Mammary epithelial cell (primary cell): ENCODE measurements at regions of chr11 and their contacts with region 1.

Region 1: DNA sequence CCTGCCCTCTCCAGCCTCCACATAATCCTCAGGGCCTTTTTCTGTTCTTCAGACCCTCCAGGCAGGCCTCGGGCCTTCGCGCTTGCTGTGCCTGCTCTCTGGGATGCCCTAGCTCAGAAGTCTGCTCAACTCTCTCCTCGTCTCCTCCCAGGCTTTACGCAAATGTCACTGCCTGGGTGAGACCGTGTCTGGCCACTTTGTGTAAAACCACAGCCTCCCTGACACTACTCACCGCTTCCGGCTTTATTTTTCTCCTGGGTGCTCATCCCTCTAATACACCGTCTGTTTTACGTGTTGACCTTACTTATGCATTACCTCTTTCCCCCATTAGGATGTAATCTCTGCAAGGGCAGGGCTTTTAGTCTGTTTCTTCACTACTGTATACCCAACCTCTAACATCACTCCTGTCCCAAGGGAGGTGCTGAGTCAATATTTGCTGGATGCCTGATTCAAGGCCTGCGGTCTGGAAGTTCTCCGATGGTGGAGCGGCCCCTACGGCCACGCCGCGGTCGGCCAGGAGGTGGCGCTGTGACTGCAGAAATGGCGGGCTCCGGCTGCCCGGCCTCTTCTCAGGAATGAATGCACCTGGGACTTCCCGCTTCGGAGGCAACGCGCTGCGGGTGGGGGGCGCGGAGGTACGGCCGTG is 58.2 kb upstream of the THY1 start:
- DNase-seq: peak; percentile 78
- H3K4me3 ChIP-seq: no peak overlapping the region
- H3K27ac ChIP-seq: no peak overlapping the region
- H3K4me1 ChIP-seq: no peaks in the 10 kb centered on the region
- H3K27me3 ChIP-seq: no peaks in the 10 kb centered on the region
- CTCF ChIP-seq: peak; percentile 91 to 97

Region 2: DNA sequence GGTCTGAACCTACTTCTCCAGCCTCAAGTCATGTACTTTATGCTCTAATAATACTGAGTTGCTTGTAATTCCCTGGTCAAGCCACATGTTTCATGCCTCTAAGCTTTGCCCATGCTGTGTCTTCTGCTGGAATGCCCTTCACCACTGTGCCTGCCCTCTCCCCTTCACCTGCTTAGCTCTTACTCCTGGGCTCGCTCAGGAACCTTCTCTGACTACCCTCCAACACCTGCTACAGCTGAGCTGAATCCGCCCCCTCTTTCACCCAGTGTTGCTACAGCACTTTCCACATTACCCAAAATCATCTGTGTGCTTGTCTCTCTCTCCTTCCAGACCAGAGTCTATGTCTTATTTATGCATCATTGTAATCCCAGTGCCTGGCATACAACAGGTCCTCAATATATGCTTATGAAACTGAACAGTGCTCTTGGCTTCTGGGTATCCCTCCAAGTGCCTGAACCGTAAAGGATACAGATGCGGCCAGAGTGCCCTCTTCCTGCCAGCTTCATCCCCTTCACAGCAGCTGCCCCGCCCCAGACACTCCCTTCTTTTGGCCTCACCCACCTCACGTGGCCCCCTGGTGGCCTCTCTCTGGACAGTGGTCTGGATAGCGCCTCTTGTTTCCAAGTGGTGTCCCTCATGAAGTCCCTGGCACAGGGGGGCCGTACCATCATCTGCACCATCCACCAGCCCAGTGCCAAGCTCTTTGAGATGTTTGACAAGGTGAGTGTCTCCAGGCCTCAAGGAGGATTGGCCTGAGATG is 325.2 kb before region 1 on chr11:
- CTCF ChIA-PET with region 1: no interaction called
- dilution Hi-C with region 1: no loop called
- in situ Hi-C with region 1: no loop called
- intact Hi-C with region 1: no loop called
- DNase-seq: no peak
- H3K4me3 ChIP-seq: no peak overlapping the region
- H3K27ac ChIP-seq: no peak overlapping the region
- H3K4me1 ChIP-seq: no peaks in the 10 kb centered on the region
- H3K27me3 ChIP-seq: no peaks in the 10 kb centered on the region
- CTCF ChIP-seq: no peak

Region 3: DNA sequence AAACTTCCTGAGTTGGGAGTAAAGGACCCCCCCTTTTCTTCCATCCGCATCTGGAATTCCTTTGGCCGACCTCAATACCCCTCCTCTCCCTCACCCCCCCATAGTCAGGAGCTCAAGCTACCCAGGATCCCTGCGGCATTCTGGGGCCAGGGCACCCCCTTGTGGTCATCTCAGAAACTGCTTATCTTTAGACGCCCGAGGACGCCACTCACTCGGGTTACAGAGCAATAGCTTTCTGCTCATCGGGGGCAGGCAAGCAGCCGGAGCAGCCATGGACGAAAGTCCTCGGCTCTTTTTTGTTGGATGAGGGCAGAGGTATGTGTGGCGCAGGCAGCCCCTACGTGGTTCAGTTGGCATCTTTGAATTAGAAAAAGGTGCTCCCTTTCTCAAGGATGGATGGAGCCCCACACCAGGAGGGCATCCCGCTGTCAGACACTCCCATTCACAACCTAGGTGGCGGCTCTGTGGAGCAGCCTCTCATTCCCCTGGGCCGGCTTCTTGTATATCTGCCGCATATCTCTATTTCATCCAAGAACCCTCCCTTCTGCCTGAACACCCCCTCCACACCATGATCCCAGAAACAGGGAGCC is 142.7 kb before region 1 on chr11:
- CTCF ChIA-PET with region 1: no interaction called
- dilution Hi-C with region 1: no loop called
- in situ Hi-C with region 1: no loop called
- intact Hi-C with region 1: no loop called
- DNase-seq: peak; percentile 44
- H3K4me3 ChIP-seq: no peak overlapping the region
- H3K27ac ChIP-seq: no peak overlapping the region
- H3K4me1 ChIP-seq: peaks cover 29% of the 10 kb centered on the region
- H3K27me3 ChIP-seq: peaks cover 12% of the 10 kb centered on the region
- CTCF ChIP-seq: peak; percentile 85

Region 4: DNA sequence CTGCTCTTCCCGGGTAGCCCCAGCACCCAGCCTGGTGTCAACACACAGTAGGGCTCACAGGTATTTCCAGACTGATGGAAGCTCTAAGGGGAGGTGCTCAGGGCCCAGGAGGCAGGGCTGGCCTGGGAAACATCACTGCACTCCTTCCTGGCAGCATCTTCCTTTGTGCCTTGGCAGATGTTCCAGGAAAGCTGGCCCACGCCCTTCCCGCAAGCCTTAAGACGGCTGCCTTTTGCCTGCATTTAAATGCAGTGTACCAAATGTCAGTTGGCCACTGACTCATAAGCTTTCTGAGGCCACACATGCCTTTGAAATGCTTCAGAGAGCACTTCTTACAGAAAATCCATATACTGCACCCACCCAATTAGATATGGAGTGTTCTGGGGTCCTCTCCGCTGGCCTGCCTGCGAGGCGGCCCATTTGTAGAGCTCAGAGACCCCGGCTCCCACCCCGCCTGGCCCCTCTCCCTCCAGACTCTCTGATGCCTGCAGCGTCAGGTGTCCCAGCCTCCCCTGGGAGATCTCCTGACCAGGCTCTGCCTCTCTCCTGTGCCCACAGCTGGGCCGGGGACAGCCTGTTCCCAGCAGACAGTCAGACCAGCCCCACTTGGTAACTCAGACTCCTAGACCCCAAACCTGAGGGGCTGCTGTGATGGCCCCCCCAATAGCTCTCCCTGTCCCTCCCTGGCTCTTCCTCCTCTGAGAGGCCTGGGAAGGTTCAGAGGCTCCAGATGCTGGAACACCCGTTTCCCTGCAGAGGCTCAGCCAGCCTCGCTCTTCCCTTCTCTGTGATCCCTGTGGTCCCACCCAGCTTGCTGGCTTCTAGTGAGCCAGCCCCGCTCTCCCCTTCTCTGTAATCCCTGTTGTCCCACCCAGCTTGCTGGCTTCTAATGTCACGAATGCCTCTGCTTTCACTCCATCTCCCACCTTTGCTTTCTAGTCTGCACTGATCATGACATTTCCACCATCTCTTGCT is 10.5 kb before region 1 on chr11:
- CTCF ChIA-PET with region 1: no interaction called
- dilution Hi-C with region 1: no loop called
- in situ Hi-C with region 1: no loop called
- intact Hi-C with region 1: no loop called
- DNase-seq: peak; percentile 75
- H3K4me3 ChIP-seq: no peak overlapping the region
- H3K27ac ChIP-seq: no peak overlapping the region
- H3K4me1 ChIP-seq: peaks cover 8% of the 10 kb centered on the region
- H3K27me3 ChIP-seq: no peaks in the 10 kb centered on the region
- CTCF ChIP-seq: no peak

Region 5: GRCh38 chr11:119520966-119521365 is 39.8 kb after region 1 on chr11:
- CTCF ChIA-PET with region 1: no interaction called
- dilution Hi-C with region 1: loop called (anchors 5 kb)
- in situ Hi-C with region 1: no loop called
- intact Hi-C with region 1: no loop called
- DNase-seq: no peak
- H3K4me3 ChIP-seq: no peak overlapping the region
- H3K27ac ChIP-seq: no peak overlapping the region
- H3K4me1 ChIP-seq: no peaks in the 10 kb centered on the region
- H3K27me3 ChIP-seq: no peaks in the 10 kb centered on the region
- CTCF ChIP-seq: no peak

Region 6: DNA sequence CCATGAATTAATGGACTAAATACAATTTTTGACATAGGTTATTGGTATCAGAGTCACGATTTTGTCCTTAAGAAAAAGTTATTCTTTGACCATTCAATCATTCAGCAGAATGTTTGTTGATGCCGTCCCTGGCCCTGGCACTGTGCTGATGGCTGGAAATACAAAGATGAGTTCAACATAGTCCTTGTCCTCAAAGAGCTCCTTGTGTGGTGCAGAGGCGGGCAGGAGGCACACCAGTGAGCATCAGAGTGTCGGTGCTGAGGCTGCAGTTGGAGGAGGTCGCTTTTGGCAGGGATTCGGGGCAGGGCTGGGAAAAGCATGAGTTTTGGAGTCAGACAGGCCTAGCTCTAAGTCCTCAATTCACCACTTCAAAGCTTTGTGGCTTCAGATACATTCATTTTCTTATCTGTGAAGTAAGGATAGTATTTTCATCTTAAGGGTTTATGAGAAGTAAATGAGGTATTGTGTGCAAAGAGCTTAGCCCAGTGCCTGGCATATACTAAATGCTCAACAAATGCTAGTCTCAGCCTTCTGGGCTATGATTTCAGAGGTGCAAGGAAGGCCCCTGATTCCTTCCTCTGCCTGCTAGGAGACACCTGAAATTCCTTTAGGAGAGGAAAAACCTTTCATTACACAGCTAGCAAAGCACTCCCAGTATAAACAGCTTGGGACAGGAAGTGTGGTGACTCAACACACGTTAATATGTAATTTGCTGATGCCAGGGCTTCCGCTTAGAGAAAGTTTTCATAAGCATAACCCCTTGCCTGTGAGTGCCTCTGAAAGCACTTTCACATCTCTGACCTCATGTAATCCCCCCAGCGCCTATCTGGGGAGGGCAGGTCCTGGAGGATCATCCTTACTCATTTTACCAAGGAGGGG is 134.1 kb after region 1 on chr11:
- CTCF ChIA-PET with region 1: no interaction called
- dilution Hi-C with region 1: no loop called
- in situ Hi-C with region 1: no loop called
- intact Hi-C with region 1: loop called (anchors 1 kb)
- DNase-seq: peak; percentile 78
- H3K4me3 ChIP-seq: no peak overlapping the region
- H3K27ac ChIP-seq: peak overlapping the region; percentile 32
- H3K4me1 ChIP-seq: peaks cover 23% of the 10 kb centered on the region
- H3K27me3 ChIP-seq: no peaks in the 10 kb centered on the region
- CTCF ChIP-seq: no peak

Region 7: DNA sequence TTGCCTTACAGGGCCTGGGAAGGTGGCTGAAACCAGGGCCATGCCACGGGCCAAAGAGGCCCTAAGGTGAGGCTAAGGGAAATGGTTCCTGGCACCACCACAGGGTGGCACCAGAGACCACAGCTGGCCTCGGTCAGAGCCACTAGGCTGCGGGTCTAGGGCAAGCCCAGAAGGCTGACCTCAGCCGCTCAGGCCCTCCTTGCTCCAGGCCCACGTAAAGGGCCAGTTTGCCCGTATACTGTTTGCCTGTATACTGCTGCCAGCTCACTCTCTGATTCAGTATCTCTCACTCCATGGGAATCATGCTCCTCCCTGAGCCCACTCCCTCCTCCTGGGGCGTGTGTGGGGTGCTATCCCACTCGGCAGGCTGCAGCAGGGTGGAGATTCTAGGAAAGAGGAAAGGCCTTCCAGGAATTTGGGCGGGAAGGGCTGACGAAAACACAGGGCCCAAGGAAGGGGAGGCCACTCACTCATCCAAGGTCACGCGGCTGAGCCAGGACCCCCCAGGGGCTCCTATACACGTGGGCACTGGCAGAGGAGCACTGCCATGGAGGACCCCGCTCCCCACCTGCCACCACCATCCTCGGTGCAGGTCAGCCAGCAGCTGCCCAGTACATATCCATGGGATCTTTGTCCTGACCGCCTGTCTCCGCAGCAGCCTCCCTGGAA is 185.5 kb after region 1 on chr11:
- CTCF ChIA-PET with region 1: no interaction called
- dilution Hi-C with region 1: no loop called
- in situ Hi-C with region 1: no loop called
- intact Hi-C with region 1: loop called (anchors 1 kb)
- DNase-seq: peak; percentile 58
- H3K4me3 ChIP-seq: no peak overlapping the region
- H3K27ac ChIP-seq: peak overlapping the region; percentile 4
- H3K4me1 ChIP-seq: peaks cover 26% of the 10 kb centered on the region
- H3K27me3 ChIP-seq: no peaks in the 10 kb centered on the region
- CTCF ChIP-seq: peak; percentile 76 to 92

Region 8: GRCh38 chr11:120013325-120014270 is 532.5 kb after region 1 on chr11:
- CTCF ChIA-PET with region 1: no interaction called
- dilution Hi-C with region 1: no loop called
- in situ Hi-C with region 1: no loop called
- intact Hi-C with region 1: loop called (anchors 2 kb)
- DNase-seq: peak; percentile 40
- H3K4me3 ChIP-seq: no peak overlapping the region
- H3K27ac ChIP-seq: no peak overlapping the region
- H3K4me1 ChIP-seq: no peaks in the 10 kb centered on the region
- H3K27me3 ChIP-seq: peaks cover 2% of the 10 kb centered on the region
- CTCF ChIP-seq: peak; percentile 87 to 98

Region 9: GRCh38 chr11:120172054-120172911 is 691.1 kb after region 1 on chr11:
- CTCF ChIA-PET with region 1: no interaction called
- dilution Hi-C with region 1: no loop called
- in situ Hi-C with region 1: no loop called
- intact Hi-C with region 1: loop called (anchors 5 kb)
- DNase-seq: peak; percentile 52
- H3K4me3 ChIP-seq: no peak overlapping the region
- H3K27ac ChIP-seq: no peak overlapping the region
- H3K4me1 ChIP-seq: peaks cover 16% of the 10 kb centered on the region
- H3K27me3 ChIP-seq: no peaks in the 10 kb centered on the region
- CTCF ChIP-seq: peak; percentile 65 to 93